HEK293 (cell line): ENCODE measurements at regions of chr1 and their contacts with region 1.

Region 1: GRCh38 chr1:74504125-74504932 is 8.1 kb downstream of the LRRC53 start:
- H3K4me3 ChIP-seq: no peak overlapping the region
- H3K27ac ChIP-seq: no peak overlapping the region
- H3K4me1 ChIP-seq: no peaks in the 10 kb centered on the region
- CTCF ChIP-seq: no peak

Region 2: GRCh38 chr1:74356493-74356892 is 147.8 kb before region 1 on chr1:
- CTCF ChIA-PET with region 1: no interaction called
- POLR2A ChIA-PET with region 1: no interaction called
- H3K4me3 ChIP-seq: no peak overlapping the region
- H3K27ac ChIP-seq: no peak overlapping the region
- H3K4me1 ChIP-seq: no peaks in the 10 kb centered on the region
- CTCF ChIP-seq: no peak

Region 3: DNA sequence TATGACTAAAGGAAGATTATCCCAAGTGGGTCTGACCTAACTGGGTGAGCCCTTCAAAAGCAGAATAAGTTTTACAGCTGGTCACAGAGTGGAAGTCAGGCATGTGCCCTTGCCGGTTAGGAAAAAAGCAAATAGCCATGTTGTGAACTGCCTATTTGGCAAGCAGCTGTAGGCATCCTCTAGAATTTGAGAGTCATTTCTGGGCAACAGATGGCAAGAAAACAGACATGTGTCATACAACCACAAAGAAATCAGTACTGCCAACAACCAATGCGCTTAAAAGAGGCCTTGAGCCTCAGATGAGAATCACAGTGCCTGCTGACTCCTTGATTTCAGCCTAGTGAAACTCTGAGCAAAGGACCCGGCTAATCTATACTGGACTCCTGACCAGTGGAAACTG is 18.7 kb before region 1 on chr1:
- CTCF ChIA-PET with region 1: interaction called, 20 read pairs
- POLR2A ChIA-PET with region 1: no interaction called
- H3K4me3 ChIP-seq: no peak overlapping the region
- H3K27ac ChIP-seq: no peak overlapping the region
- H3K4me1 ChIP-seq: no peaks in the 10 kb centered on the region
- CTCF ChIP-seq: no peak